ENCODE measurements at regions of chr1 and their contacts with region 1.

Region 1: DNA sequence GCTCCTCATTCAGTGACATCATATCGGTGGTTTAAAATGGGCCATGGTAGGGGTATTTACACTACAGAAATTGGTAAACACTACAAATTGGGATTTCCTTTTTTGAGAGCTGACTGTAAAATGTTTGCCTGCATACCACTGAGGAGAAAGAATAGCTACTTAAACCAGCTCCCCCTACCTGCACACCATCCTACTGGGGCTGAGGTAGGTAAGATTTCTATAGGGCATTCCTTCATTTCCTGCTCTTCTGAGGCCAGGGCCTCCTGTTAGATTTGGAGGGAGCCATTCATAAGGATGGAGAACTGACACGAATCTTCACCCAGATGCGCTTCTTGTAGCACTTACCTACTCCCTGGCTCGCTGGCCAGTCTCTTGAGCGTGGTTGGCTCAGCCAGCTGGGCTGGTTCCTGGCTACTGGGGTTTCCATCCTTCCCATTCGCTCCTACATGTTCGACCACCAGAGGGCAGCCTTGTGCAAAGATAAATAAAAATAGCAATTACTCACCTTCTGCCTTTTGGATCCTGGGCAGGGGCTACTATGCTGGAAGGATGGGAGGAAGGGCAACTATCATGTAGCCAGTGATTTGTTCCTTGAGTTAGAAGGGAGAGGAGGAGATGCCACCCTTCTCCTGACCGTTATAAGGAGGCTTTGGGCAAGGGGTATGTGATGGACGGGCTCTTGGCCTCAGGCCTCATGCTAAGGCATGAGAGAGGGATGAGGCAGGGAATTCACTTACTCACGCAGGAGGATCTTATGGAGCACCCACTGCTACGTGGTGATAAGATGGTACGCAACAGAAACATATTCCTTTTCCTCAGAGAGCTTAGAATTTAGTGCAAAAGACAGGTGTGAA is 10.7 kb downstream of the OPTC start:
- DNase-seq: peak; percentile 34 to 86 (median 77)
- ATAC-seq: peak; percentile 66
- H3K4me3 ChIP-seq: no peak overlapping the region
- H3K4me3 Mint-ChIP-seq: no peak overlapping the region
- H3K27ac ChIP-seq: no peak overlapping the region
- H3K27ac Mint-ChIP-seq: no peak overlapping the region
- H3K4me1 ChIP-seq: no peaks in the 10 kb centered on the region
- H3K4me1 Mint-ChIP-seq: peaks cover 2% of the 10 kb centered on the region
- H3K27me3 ChIP-seq: peaks cover 0 to 6% of the 10 kb centered on the region in 2 experiments
- H3K27me3 Mint-ChIP-seq: peaks cover 3% of the 10 kb centered on the region
- CTCF ChIP-seq: peak; percentile 88

Region 2: GRCh38 chr1:202976633-202977032 is 528.0 kb before region 1 on chr1:
- CTCF ChIA-PET with region 1: no interaction called
- POLR2A ChIA-PET with region 1: no interaction called
- intact Hi-C with region 1: no loop called
- DNase-seq: no peak
- ATAC-seq: no peak
- H3K4me3 ChIP-seq: no peak overlapping the region
- H3K4me3 Mint-ChIP-seq: no peak overlapping the region
- H3K27ac ChIP-seq: no peak overlapping the region
- H3K27ac Mint-ChIP-seq: no peak overlapping the region
- H3K4me1 ChIP-seq: no peaks in the 10 kb centered on the region
- H3K4me1 Mint-ChIP-seq: no peaks in the 10 kb centered on the region
- H3K27me3 ChIP-seq: no peaks in the 10 kb centered on the region
- H3K27me3 Mint-ChIP-seq: peaks cover 36% of the 10 kb centered on the region
- CTCF ChIP-seq: no peak

Region 3: GRCh38 chr1:203099805-203100516 is 404.7 kb before region 1 on chr1:
- CTCF ChIA-PET with region 1: no interaction called
- POLR2A ChIA-PET with region 1: no interaction called
- intact Hi-C with region 1: no loop called
- DNase-seq: peak in 1 of 9 experiments; percentile 31
- ATAC-seq: no peak
- H3K4me3 ChIP-seq: no peak overlapping the region
- H3K4me3 Mint-ChIP-seq: no peak overlapping the region
- H3K27ac ChIP-seq: no peak overlapping the region
- H3K27ac Mint-ChIP-seq: no peak overlapping the region
- H3K4me1 ChIP-seq: no peaks in the 10 kb centered on the region
- H3K4me1 Mint-ChIP-seq: no peaks in the 10 kb centered on the region
- H3K27me3 ChIP-seq: no peaks in the 10 kb centered on the region
- H3K27me3 Mint-ChIP-seq: peaks cover 22% of the 10 kb centered on the region
- CTCF ChIP-seq: no peak

Region 4: GRCh38 chr1:203486618-203487370 is 17.8 kb before region 1 on chr1:
- CTCF ChIA-PET with region 1: interaction called, 13 read pairs
- POLR2A ChIA-PET with region 1: no interaction called
- intact Hi-C with region 1: no loop called
- DNase-seq: peak in 1 of 9 experiments; percentile 15
- ATAC-seq: no peak
- H3K4me3 ChIP-seq: peak overlapping the region in 1 of 2 experiments; percentile 65
- H3K4me3 Mint-ChIP-seq: peak overlapping the region; percentile 82
- H3K27ac ChIP-seq: peak overlapping the region in 1 of 2 experiments; percentile 6
- H3K27ac Mint-ChIP-seq: no peak overlapping the region
- H3K4me1 ChIP-seq: peaks cover 13% of the 10 kb centered on the region
- H3K4me1 Mint-ChIP-seq: peaks cover 10% of the 10 kb centered on the region
- H3K27me3 ChIP-seq: no peaks in the 10 kb centered on the region
- H3K27me3 Mint-ChIP-seq: no peaks in the 10 kb centered on the region
- CTCF ChIP-seq: no peak

Region 5: DNA sequence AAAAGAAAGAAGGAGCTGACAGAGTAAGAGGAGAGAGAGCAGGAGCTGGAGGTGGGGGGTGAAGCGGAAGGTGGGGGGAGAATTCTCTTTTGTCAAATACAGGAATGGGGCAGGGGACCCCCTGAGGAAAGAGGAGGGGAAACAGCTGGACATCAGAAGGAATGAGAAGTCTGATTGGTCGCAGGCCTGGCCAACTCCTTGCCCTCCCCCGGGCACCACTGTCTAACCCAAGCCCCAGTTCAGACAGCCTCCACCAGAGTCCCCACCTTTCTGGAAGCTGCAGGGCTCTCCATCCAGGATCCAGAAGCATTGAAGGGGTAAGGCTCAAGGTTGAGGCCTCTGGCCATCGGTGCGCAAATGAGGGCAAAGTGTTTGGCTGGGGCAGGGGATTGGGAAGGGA is 10.7 kb before region 1 on chr1 and contains the start of gene OPTC:
- CTCF ChIA-PET with region 1: interaction called, 13 read pairs
- POLR2A ChIA-PET with region 1: no interaction called
- intact Hi-C with region 1: no loop called
- DNase-seq: no peak
- ATAC-seq: no peak
- H3K4me3 ChIP-seq: no peak within 1 kb of the TSS
- H3K4me3 Mint-ChIP-seq: no peak within 1 kb of the TSS
- H3K27ac ChIP-seq: no peak within 1 kb of the TSS
- H3K27ac Mint-ChIP-seq: no peak within 1 kb of the TSS
- H3K4me1 ChIP-seq: no peaks in the 10 kb centered on the region
- H3K4me1 Mint-ChIP-seq: peaks cover 3% of the 10 kb centered on the region
- H3K27me3 ChIP-seq: no peaks in the 10 kb centered on the region
- H3K27me3 Mint-ChIP-seq: peaks cover 12% of the 10 kb centered on the region
- CTCF ChIP-seq: no peak
- total RNA-seq, gene OPTC: not detected

Region 6: GRCh38 chr1:203520315-203520714 is 15.7 kb after region 1 on chr1:
- CTCF ChIA-PET with region 1: interaction called, 21 read pairs
- POLR2A ChIA-PET with region 1: no interaction called
- intact Hi-C with region 1: no loop called
- DNase-seq: no peak
- ATAC-seq: no peak
- H3K4me3 ChIP-seq: no peak overlapping the region
- H3K4me3 Mint-ChIP-seq: no peak overlapping the region
- H3K27ac ChIP-seq: no peak overlapping the region
- H3K27ac Mint-ChIP-seq: no peak overlapping the region
- H3K4me1 ChIP-seq: no peaks in the 10 kb centered on the region
- H3K4me1 Mint-ChIP-seq: peaks cover 2% of the 10 kb centered on the region
- H3K27me3 ChIP-seq: no peaks in the 10 kb centered on the region
- H3K27me3 Mint-ChIP-seq: peaks cover 2% of the 10 kb centered on the region
- CTCF ChIP-seq: no peak

Region 7: DNA sequence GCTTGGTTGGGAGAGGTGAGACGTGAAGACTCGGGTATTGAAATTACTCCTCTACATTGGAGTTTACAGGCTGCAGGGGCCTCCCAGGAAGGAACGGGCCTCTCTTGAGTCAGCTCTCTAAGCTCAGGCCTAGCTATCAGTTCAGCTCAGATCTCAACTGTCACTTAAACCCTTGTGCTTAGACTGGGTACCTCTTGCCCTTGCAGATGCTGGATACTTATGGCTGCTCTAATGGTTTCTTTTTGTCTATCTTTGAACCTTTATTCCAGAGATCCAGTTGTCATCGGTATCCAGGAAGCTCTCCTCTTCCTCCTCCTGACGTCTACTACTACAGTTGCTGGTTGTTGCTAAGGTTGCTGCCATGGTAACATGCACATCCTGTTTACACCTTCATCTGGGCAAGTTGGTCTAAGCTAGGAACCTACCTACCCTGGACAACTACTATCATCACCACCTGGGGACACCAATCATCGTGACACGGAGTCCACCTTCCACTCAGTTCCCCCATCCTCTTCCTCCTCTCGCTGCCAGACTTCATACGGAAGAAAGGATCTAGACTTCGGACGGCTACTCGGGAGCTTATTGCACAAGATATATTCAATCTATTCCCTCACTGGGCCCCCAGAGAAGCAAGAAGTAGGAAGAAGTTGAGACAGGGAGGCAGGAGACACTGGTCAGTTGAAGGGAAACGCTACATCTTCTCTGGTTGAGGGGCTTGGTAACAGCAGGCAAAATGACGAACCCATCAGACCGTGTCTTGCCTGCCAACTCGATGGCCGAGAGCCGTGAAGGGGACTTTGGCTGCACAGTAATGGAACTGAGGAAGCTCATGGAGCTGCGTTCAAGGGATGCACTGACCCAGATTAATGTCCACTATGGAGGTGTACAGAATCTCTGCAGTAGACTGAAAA is 178.1 kb after region 1 on chr1:
- CTCF ChIA-PET with region 1: interaction called, 13 read pairs
- POLR2A ChIA-PET with region 1: no interaction called
- intact Hi-C with region 1: no loop called
- DNase-seq: peak; percentile 19 to 94 (median 59)
- ATAC-seq: peak; percentile 89
- H3K4me3 ChIP-seq: no peak overlapping the region
- H3K4me3 Mint-ChIP-seq: peak overlapping the region; percentile 48
- H3K27ac ChIP-seq: peak overlapping the region; percentile 33 to 82
- H3K27ac Mint-ChIP-seq: peak overlapping the region; percentile 93
- H3K4me1 ChIP-seq: peaks cover 22% of the 10 kb centered on the region
- H3K4me1 Mint-ChIP-seq: peaks cover 43% of the 10 kb centered on the region
- H3K27me3 ChIP-seq: no peaks in the 10 kb centered on the region
- H3K27me3 Mint-ChIP-seq: no peaks in the 10 kb centered on the region
- CTCF ChIP-seq: no peak

Region 8: DNA sequence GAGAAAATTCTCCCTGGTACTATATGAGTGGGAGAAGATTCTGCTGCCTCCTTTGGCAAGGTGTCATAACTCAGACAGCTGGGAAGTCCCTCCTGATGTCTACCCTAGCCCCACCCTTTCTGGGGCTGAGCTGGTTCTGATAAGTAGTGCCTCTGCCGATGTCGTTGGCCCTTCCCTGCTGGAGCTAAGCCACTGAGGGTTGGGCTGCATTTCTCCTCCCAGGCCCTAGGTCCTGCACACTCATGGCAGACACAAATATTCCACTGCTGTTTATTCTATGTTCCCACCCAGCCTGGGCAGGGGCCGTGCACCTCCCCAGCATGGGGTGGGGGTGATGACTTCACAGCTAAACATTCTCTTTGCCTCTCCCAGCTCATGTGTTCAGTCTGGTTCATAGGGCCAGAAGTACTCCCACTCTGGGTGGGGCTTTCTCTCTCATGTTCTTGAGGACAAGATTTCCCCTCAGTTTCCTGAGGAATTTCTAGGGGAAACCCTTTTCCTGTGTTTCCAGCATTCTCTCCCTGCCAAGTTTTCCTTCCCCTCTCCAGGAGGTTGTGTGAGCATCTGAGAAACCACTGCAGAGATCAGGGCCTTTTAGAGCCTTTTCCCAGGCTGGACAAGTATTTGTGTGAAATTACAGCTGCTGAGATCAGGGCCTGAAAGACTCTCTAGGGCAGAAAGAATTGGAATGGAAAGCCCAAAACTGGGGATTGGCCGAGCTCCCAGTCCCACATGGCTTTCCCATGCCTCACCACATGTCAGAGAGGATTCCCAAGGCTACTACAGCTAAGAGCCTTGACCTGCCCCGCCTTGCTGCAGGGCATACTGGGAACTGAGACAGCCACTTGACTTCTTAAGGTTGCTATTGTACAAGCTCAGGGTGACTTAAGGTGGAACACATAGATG is 188.2 kb after region 1 on chr1:
- CTCF ChIA-PET with region 1: interaction called, 32 read pairs
- POLR2A ChIA-PET with region 1: no interaction called
- intact Hi-C with region 1: no loop called
- DNase-seq: peak in 1 of 9 experiments; percentile 23
- ATAC-seq: no peak
- H3K4me3 ChIP-seq: no peak overlapping the region
- H3K4me3 Mint-ChIP-seq: no peak overlapping the region
- H3K27ac ChIP-seq: peak overlapping the region in 1 of 2 experiments; percentile 34
- H3K27ac Mint-ChIP-seq: peak overlapping the region; percentile 69
- H3K4me1 ChIP-seq: peaks cover 10% of the 10 kb centered on the region
- H3K4me1 Mint-ChIP-seq: peaks cover 42% of the 10 kb centered on the region
- H3K27me3 ChIP-seq: no peaks in the 10 kb centered on the region
- H3K27me3 Mint-ChIP-seq: no peaks in the 10 kb centered on the region
- CTCF ChIP-seq: no peak

Region 9: DNA sequence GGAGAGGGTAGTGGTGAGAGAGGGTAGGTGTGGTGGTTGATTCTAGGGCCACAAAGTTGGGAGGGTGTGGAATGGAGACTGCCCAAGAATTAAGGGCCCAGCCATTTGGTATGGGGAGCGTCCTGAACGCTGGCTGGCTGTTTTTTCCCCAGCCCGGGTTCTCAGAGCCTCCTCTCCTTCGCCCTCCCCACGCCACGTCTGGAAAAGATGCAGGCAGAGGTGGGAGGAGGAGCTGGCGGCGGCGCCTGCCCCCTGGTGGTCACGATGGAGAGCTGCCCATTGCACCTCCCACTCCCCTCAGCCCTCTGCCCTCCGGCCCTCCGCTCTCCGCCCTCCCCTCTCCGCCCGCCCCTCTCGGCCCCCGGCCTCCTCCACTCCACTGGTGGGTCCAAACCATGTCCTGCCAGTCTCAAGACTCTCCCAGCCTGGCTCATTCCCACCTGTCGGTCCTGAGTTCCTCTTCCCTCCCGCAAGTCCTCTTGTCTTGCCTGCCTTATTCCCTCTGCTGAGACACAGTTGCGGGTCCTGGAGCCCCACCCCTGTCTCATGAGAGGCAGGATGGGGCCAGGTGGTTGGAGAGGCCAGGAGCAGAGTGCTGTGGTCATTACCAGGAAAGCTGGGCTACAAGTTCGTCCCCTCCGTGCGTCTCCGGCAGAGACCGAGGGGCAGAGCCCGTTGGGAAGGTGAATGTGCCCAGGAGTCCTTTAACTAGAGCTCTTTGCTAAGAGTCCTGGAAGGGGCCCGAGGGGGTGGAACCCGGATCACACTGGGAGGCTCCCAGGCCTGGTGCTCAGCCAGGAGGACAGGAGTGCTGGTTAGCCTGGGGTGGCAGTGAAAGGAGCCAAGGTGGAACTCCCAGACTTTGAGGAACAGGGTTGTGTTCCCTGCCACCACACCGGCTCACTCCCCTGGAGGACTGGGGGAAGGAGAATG is 624.6 kb after region 1 on chr1:
- CTCF ChIA-PET with region 1: interaction called, 10 read pairs
- POLR2A ChIA-PET with region 1: no interaction called
- intact Hi-C with region 1: loop called in 1 of 2 experiments (anchors 2 kb)
- DNase-seq: peak; percentile 27 to 82 (median 57)
- ATAC-seq: peak; percentile 89
- H3K4me3 ChIP-seq: no peak overlapping the region
- H3K4me3 Mint-ChIP-seq: no peak overlapping the region
- H3K27ac ChIP-seq: no peak overlapping the region
- H3K27ac Mint-ChIP-seq: no peak overlapping the region
- H3K4me1 ChIP-seq: peaks cover 7% of the 10 kb centered on the region
- H3K4me1 Mint-ChIP-seq: peaks cover 10% of the 10 kb centered on the region
- H3K27me3 ChIP-seq: no peaks in the 10 kb centered on the region
- H3K27me3 Mint-ChIP-seq: no peaks in the 10 kb centered on the region
- CTCF ChIP-seq: peak; percentile 71

Measured in CD8-positive, alpha-beta T cell (primary cell).